Activated CD4-positive, alpha-beta memory T cell treated with anti-CD3 and anti-CD28 coated beads, Interleukin-2, amount 10 ng/mL, durations not matched to agents 7 days and 5 days (primary cell): ENCODE measurements at regions of chr11 and their contacts with region 1.

Region 1: DNA sequence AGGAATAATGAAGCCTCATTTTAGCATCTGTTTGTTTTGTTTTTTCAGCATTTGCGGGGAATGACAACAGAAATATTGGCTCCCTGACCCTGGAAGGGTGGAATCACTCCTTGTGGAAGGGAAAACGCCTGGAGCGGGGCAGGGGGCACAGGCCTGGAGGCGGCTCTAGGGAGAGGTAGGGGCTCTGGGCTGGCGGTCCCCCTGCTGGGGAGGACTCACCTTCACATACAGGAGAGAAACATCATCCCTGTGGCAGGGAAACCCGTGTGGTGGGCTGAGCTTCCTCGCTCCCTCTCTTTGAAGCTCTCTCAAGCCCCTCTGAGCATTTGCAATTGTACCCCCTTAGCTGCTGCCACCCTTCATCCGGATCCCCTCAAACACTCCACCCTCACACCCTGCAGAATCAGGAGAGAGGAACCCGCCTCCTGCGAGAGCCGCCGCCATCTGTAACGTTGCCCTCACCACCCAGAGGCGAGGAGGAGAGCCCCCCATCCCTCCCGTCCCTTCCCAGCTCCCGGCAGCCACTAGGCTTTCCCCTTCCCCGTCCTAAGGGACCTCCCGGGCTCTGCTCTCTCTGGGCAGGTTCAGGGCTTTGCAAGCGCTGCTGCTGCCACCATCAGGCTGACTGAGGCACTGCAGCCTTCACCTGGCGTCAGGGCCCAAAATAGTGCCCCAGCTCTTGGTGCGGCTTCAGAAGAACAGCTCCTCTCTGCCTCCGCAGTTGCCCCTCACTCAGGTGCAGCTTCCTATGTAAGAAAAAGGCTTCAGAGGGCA is 10.4 kb downstream of the KIRREL3 start:
- DNase-seq: peak; percentile 61
- H3K4me3 Mint-ChIP-seq: no peak overlapping the region
- H3K27ac Mint-ChIP-seq: no peak overlapping the region
- H3K4me1 Mint-ChIP-seq: no peaks in the 10 kb centered on the region
- H3K27me3 Mint-ChIP-seq: peaks cover 6% of the 10 kb centered on the region

Region 2: GRCh38 chr11:126716456-126717083 is 273.6 kb before region 1 on chr11:
- CTCF ChIA-PET with region 1: interaction called, 14 read pairs
- POLR2A ChIA-PET with region 1: no interaction called
- DNase-seq: peak; percentile 41
- H3K4me3 Mint-ChIP-seq: no peak overlapping the region
- H3K27ac Mint-ChIP-seq: no peak overlapping the region
- H3K4me1 Mint-ChIP-seq: no peaks in the 10 kb centered on the region
- H3K27me3 Mint-ChIP-seq: peaks cover 1% of the 10 kb centered on the region